Activated CD4-positive, alpha-beta T cell treated with anti-CD3 and anti-CD28 coated beads for 36 hours (primary cell): ENCODE measurements at regions of chr20 and their contacts with region 1.

Region 1: GRCh38 chr20:35954200-35954906 is at the start of gene SCAND1:
- DNase-seq: peak; percentile 99
- ATAC-seq: peak; percentile 91
- H3K4me3 Mint-ChIP-seq: peak within 1 kb of the TSS; percentile 97
- H3K27ac Mint-ChIP-seq: peak within 1 kb of the TSS; percentile 100
- H3K4me1 Mint-ChIP-seq: peaks cover 11% of the 10 kb centered on the region
- H3K27me3 Mint-ChIP-seq: no peaks in the 10 kb centered on the region
- total RNA-seq, gene SCAND1: 37.8 to 39.3 TPM

Region 2: GRCh38 chr20:34516247-34517113 is 1437.9 kb before region 1 on chr20 and contains the start of gene DYNLRB1:
- CTCF ChIA-PET with region 1: no interaction called
- POLR2A ChIA-PET with region 1: no interaction called
- intact Hi-C with region 1: loop called in 1 of 2 experiments (anchors 5 kb)
- DNase-seq: peak; percentile 98
- ATAC-seq: peak; percentile 81
- H3K4me3 Mint-ChIP-seq: peak within 1 kb of the TSS; percentile 97
- H3K27ac Mint-ChIP-seq: peak within 1 kb of the TSS; percentile 98
- H3K4me1 Mint-ChIP-seq: peaks cover 35% of the 10 kb centered on the region
- H3K27me3 Mint-ChIP-seq: no peaks in the 10 kb centered on the region
- total RNA-seq, gene DYNLRB1: 83.5 to 122 TPM

Region 3: DNA sequence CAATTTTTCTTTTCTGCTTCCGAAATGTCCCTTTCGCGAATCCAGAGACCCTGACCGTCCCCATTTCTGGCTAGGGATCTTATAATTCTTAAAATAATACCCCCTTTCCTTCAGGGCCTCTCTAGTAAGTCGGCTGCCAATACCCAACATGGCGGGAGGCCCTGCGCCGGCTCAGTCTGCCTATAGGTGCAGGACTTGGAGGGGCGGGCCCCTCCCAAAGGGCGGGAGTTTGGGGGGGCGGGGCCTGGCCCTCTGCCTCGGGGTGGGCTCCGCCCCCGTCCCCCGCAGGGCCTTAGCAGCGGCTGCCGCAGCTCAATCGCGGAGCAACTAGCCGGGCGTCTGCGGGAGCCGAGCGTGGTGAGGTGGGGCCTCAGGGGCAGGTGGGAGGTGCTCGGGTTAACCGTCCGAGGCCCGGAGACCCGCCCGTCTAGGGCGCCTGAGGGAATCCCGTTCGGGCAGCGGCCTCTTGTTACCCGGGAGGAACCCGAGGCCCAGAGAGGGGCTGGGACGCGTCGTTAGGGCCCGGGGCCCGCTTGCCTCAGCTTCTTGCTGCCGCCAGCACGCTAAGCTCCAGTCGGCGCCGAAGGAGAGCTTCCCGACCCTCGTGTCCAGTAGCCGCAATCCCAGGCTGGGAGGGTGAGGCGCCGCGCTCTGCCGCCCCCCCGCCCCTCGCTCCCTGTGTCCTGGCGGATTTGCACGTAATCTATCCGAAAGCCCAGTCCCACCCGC is 499.3 kb before region 1 on chr20 and contains the start of gene CEP250:
- CTCF ChIA-PET with region 1: interaction called, 3 read pairs
- POLR2A ChIA-PET with region 1: no interaction called
- intact Hi-C with region 1: loop called in 1 of 2 experiments (anchors 1 kb)
- DNase-seq: peak; percentile 98
- ATAC-seq: peak; percentile 97
- H3K4me3 Mint-ChIP-seq: peak within 1 kb of the TSS; percentile 79
- H3K27ac Mint-ChIP-seq: peak within 1 kb of the TSS; percentile 97
- H3K4me1 Mint-ChIP-seq: peaks cover 27% of the 10 kb centered on the region
- H3K27me3 Mint-ChIP-seq: no peaks in the 10 kb centered on the region
- total RNA-seq, gene CEP250: 50.4 to 60.2 TPM

Region 4: GRCh38 chr20:35664544-35665221 is 289.7 kb before region 1 on chr20 and contains the starts of genes CPNE1 and RBM12:
- CTCF ChIA-PET with region 1: interaction called, 7 read pairs
- POLR2A ChIA-PET with region 1: interaction called, 6 read pairs
- intact Hi-C with region 1: loop called (anchors 1 to 2 kb)
- DNase-seq: peak; percentile 96
- ATAC-seq: peak; percentile 68
- H3K4me3 Mint-ChIP-seq: peak within 1 kb of the TSS; percentile 80
- H3K27ac Mint-ChIP-seq: peak within 1 kb of the TSS; percentile 100
- H3K4me1 Mint-ChIP-seq: peaks cover 36% of the 10 kb centered on the region
- H3K27me3 Mint-ChIP-seq: no peaks in the 10 kb centered on the region
- total RNA-seq, gene CPNE1: 249 to 258 TPM
- total RNA-seq, gene RBM12: 122 to 148 TPM

Region 5: GRCh38 chr20:35831029-35831428 is 123.3 kb before region 1 on chr20:
- CTCF ChIA-PET with region 1: no interaction called
- POLR2A ChIA-PET with region 1: no interaction called
- intact Hi-C with region 1: no loop called
- DNase-seq: peak; percentile 28
- ATAC-seq: peak; percentile 77
- H3K4me3 Mint-ChIP-seq: no peak overlapping the region
- H3K27ac Mint-ChIP-seq: no peak overlapping the region
- H3K4me1 Mint-ChIP-seq: peaks cover 43% of the 10 kb centered on the region
- H3K27me3 Mint-ChIP-seq: no peaks in the 10 kb centered on the region

Region 6: GRCh38 chr20:35942243-35942642 is 12.1 kb before region 1 on chr20:
- CTCF ChIA-PET with region 1: interaction called, 10 read pairs
- POLR2A ChIA-PET with region 1: no interaction called
- intact Hi-C with region 1: no loop called
- DNase-seq: no peak
- ATAC-seq: no peak
- H3K4me3 Mint-ChIP-seq: no peak overlapping the region
- H3K27ac Mint-ChIP-seq: no peak overlapping the region
- H3K4me1 Mint-ChIP-seq: peaks cover under 1% of the 10 kb centered on the region
- H3K27me3 Mint-ChIP-seq: no peaks in the 10 kb centered on the region

Region 7: GRCh38 chr20:36235892-36236785 is 281.8 kb after region 1 on chr20 and contains the start of gene AAR2:
- CTCF ChIA-PET with region 1: interaction called, 7 read pairs
- POLR2A ChIA-PET with region 1: no interaction called
- intact Hi-C with region 1: loop called in 1 of 2 experiments (anchors 1 kb)
- DNase-seq: peak; percentile 91
- ATAC-seq: peak; percentile 99
- H3K4me3 Mint-ChIP-seq: peak within 1 kb of the TSS; percentile 78
- H3K27ac Mint-ChIP-seq: peak within 1 kb of the TSS; percentile 81
- H3K4me1 Mint-ChIP-seq: peaks cover 32% of the 10 kb centered on the region
- H3K27me3 Mint-ChIP-seq: no peaks in the 10 kb centered on the region
- total RNA-seq, gene AAR2: 18.7 to 20.7 TPM

Region 8: DNA sequence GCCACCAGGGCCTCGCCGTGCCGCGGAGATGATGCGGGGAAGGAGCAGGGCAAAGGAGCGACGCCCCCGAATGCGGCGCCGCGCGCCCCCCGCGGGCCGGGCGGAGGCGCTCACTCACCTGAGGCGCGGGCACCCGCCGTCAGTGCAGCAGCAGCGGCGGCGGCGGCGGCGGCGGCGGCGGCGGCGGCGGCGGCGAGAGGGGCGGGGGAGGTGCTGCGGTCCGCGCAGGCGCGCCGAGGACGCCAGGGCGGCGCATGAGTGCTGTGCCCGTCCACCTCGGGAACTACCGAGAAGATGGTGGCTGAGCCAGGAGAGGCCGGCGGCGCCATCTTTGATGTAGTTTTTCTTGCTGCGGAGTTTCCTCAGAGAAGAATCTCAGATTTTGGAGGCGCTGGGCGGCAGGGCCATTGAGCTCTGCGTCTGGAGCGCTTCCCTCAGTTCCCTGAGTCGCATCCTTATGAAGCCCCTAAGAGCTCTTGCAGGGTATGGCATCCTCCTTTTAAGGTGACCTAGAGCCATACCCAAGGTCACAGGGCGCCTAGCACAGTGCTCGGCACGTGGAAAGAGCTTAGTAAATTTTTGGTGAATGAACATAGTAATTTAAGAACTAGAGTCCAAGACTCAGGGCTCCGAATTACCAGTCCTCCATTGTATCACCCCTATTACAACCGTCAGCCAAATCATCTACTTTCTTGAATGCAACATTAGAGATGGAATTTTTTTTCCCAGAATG is 791.7 kb after region 1 on chr20 and contains the start of gene NDRG3:
- CTCF ChIA-PET with region 1: no interaction called
- POLR2A ChIA-PET with region 1: no interaction called
- intact Hi-C with region 1: loop called in 1 of 2 experiments (anchors 10 kb)
- DNase-seq: peak; percentile 96
- ATAC-seq: peak; percentile 99
- H3K4me3 Mint-ChIP-seq: peak within 1 kb of the TSS; percentile 81
- H3K27ac Mint-ChIP-seq: peak within 1 kb of the TSS; percentile 87
- H3K4me1 Mint-ChIP-seq: peaks cover 20% of the 10 kb centered on the region
- H3K27me3 Mint-ChIP-seq: no peaks in the 10 kb centered on the region
- total RNA-seq, gene NDRG3: 24.8 to 27.5 TPM